ENCODE measurements at regions of chr5 and their contacts with region 1.

Region 1: DNA sequence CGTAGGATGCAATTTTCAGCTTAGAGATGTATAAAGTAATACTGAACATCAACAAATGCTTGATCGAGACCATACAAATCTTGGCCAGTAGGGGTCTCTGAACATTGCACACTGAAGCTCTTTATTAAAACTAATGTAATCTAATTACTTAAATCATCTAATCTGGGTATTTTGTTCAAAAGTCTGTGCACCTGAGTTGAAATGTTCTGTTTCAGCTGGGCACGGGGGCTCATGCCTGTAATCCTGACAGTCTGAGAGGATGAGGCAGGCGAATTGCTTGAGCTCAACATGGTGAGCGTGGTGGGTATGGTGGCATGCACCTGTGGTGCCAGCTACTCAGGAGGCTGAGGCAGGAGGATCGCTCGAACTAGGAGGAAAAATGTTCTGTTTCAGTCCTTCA is 41.0 kb downstream of the ESM1 start:
- DNase-seq: peak; percentile 20
- H3K4me3 ChIP-seq: no peak overlapping the region
- H3K27ac ChIP-seq: no peak overlapping the region
- H3K27me3 ChIP-seq: peaks cover 13% of the 10 kb centered on the region
- CTCF ChIP-seq: peak; percentile 77

Region 2: DNA sequence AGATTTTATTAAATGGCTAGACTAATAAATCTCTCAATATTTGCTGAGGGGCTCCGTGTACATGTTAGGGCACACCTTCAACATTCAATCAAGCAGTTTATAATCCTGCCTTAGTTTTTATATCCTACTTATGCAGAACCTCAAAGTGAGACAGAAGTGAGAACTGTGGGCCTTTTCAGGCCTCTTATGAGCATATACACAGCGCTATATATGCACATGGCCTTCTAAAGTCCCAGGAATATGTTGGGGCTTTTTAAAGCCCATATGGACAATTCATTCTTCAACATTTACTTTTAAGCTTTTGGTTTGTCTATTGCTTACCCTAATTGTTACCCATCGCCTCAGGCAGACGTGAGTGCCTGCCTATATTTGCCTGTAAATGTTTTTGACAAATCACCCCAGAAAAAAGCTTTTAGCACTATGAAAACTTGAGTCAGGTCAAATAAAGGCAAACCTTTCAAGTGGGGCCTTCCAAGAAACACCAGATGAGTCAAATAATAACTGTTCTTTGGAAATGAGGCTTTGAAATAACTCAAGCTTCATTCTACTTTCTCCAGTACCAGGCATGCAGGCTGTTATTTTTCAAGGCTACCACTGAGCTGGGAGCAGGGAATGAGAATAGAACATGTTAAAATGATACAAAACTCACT is 17.1 kb before region 1 on chr5:
- CTCF ChIA-PET with region 1: interaction called, 12 read pairs
- POLR2A ChIA-PET with region 1: no interaction called
- DNase-seq: no peak
- H3K4me3 ChIP-seq: no peak overlapping the region
- H3K27ac ChIP-seq: no peak overlapping the region
- H3K27me3 ChIP-seq: peaks cover 23% of the 10 kb centered on the region
- CTCF ChIP-seq: no peak

Region 3: GRCh38 chr5:54959673-54960418 is 15.5 kb after region 1 on chr5:
- CTCF ChIA-PET with region 1: interaction called, 40 read pairs
- POLR2A ChIA-PET with region 1: no interaction called
- DNase-seq: no peak
- H3K4me3 ChIP-seq: no peak overlapping the region
- H3K27ac ChIP-seq: no peak overlapping the region
- H3K27me3 ChIP-seq: peaks cover 27% of the 10 kb centered on the region
- CTCF ChIP-seq: peak; percentile 39

Region 4: DNA sequence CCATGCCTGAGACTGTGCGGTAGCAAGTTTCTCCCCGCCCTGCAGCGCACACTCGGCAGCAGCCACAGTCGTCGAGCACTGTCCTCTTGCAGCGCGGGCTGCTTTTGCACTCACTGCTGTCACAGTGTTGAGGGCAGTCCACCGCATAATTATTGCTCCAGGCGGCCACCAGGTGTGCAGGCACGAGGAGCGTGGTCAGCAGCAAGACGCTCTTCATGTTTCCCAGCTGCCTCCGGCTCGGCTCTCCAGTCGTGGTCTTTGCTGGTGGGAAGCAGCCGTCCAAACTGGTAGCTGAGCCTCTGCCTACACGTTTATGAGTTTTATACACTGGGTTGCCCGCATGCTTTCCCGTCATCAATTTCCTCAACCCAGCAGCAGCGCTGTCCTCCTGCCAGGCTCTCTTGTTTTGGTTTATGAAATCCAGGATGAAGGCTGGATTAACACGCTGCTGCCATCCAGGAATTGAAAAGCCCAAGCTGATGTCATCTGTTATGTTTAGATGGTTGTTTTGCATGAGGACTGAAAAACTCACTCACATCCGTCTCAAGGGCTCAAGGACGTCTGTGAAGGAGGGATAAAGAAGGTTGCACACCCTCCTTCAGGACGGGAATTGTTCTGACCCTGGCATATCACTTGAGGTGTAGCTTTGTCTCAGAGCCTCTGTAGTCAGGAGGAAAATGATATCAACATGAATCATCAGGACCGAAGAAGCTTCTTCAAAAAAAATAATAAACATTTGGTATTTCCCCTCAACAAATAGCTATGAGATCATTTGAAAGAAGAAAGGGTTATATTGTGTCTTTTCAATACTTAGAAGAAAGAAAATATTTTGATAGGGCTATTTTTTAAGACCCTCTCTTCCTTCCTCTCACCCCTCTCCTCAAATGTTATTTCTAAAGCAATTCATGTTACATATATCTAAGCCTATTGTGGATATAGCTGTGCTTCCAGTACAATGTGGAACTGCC is 41.2 kb after region 1 on chr5 and contains the start of gene ESM1:
- CTCF ChIA-PET with region 1: interaction called, 19 read pairs
- POLR2A ChIA-PET with region 1: no interaction called
- DNase-seq: peak; percentile 37
- H3K4me3 ChIP-seq: peak within 1 kb of the TSS; percentile 46
- H3K27ac ChIP-seq: peak within 1 kb of the TSS; percentile 58
- H3K27me3 ChIP-seq: no peaks in the 10 kb centered on the region
- CTCF ChIP-seq: no peak
- polyA plus RNA-seq, gene ESM1: 0.27 and 0.35 TPM in 2 replicates

Region 5: GRCh38 chr5:55146543-55147151 is 202.3 kb after region 1 on chr5:
- CTCF ChIA-PET with region 1: interaction called, 99 read pairs
- POLR2A ChIA-PET with region 1: no interaction called
- DNase-seq: peak; percentile 67
- H3K4me3 ChIP-seq: no peak overlapping the region
- H3K27ac ChIP-seq: no peak overlapping the region
- H3K27me3 ChIP-seq: peaks cover 12% of the 10 kb centered on the region
- CTCF ChIP-seq: peak; percentile 99

Region 6: DNA sequence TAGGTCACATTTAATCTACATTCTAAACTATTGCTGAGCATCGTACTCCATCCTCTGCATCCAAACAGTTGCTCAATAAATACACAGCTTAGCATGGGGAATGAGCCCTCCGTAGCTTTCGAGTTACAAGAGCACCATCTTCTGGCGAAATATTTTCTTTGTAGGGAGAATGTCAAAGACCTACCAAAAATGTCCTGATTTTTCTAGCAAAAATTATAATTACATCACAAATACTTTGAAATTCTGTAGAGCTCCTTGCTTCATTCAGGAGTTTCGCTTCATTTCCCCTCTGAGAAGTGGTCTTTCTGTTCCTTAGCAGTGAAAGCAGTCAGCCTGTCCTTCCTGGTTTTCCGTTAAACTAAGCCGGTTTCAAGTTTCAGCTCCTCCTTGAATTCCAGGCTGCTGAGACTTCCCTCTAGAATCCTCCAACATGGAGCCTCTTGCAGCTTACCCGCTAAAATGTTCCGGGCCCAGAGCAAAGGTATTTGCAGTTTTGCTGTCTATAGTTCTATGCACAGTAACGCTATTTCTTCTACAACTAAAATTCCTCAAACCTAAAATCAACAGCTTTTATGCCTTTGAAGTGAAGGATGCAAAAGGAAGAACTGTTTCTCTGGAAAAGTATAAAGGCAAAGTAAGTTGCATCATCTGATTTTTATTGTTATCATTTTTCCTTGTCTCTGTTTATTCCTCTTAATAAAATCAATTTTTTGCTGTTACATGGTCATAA is 215.6 kb after region 1 on chr5 and contains the start of gene GPX8:
- CTCF ChIA-PET with region 1: interaction called, 51 read pairs
- POLR2A ChIA-PET with region 1: interaction called, 6 read pairs
- DNase-seq: peak; percentile 78
- H3K4me3 ChIP-seq: peak within 1 kb of the TSS; percentile 78
- H3K27ac ChIP-seq: peak within 1 kb of the TSS; percentile 85
- H3K27me3 ChIP-seq: no peaks in the 10 kb centered on the region
- CTCF ChIP-seq: peak; percentile 66
- polyA plus RNA-seq, gene GPX8: 234 and 317 TPM in 2 replicates